Activated CD4-positive, alpha-beta T cell treated with anti-CD3 and anti-CD28 coated beads for 36 hours (primary cell): ENCODE measurements at regions of chr22 and their contacts with region 1.

Region 1: DNA sequence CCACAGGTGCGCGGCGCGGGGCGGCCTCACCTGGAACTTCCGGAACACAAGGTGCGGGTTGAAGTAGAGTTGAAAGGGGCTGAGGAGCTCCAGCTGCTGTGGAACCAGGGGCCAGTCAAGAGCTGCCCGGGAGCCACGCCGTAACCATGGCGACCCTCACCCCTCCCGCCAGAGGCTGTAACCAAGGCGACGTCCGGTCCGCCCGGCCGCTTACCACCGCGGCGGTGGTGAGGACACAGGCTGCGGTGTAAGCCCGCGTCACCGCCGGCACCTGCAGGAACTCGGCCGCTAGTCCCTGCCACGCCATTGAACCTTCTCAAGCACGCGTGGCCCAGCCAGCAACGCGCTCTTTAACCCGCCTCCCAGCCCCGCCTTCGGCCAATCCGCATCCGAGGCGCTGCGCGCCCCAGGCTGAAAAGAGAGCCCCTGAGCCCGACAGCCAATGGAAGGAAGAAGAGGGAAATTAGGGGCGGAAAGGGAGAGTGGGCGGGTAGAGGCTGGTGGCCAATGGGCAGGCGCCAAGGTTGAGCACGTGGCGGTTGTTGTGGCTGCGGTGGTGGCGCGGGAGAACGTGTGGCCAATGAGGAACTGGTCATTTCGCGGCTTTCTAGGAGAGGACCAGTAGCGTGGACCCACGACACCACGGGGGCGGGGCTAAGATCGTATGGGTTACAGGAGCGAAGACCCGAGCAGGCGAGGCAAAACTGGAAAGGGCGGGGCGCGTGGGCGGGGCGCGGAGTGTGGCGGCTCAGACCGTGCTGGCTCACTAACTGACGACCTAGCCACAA is at the start of gene DERL3:
- DNase-seq: peak; percentile 97
- ATAC-seq: peak; percentile 94
- H3K4me3 Mint-ChIP-seq: peak within 1 kb of the TSS; percentile 83
- H3K27ac Mint-ChIP-seq: peak within 1 kb of the TSS; percentile 80
- H3K4me1 Mint-ChIP-seq: peaks cover 19% of the 10 kb centered on the region
- H3K27me3 Mint-ChIP-seq: peaks cover 2% of the 10 kb centered on the region
- total RNA-seq, gene DERL3: 5.2 to 5.7 TPM

Region 2: GRCh38 chr22:23750714-23751440 is 88.0 kb before region 1 on chr22 and contains the start of gene ZNF70:
- CTCF ChIA-PET with region 1: interaction called, 3 read pairs
- POLR2A ChIA-PET with region 1: no interaction called
- intact Hi-C with region 1: loop called in 1 of 2 experiments (anchors 1 kb)
- DNase-seq: peak; percentile 91
- ATAC-seq: peak; percentile 99
- H3K4me3 Mint-ChIP-seq: peak within 1 kb of the TSS; percentile 77
- H3K27ac Mint-ChIP-seq: peak within 1 kb of the TSS; percentile 56
- H3K4me1 Mint-ChIP-seq: peaks cover 11% of the 10 kb centered on the region
- H3K27me3 Mint-ChIP-seq: peaks cover 2% of the 10 kb centered on the region
- total RNA-seq, gene ZNF70: 1.6 to 1.7 TPM

Region 3: GRCh38 chr22:23826465-23827199 is 12.2 kb before region 1 on chr22:
- CTCF ChIA-PET with region 1: no interaction called
- POLR2A ChIA-PET with region 1: no interaction called
- intact Hi-C with region 1: no loop called
- DNase-seq: no peak
- ATAC-seq: no peak
- H3K4me3 Mint-ChIP-seq: no peak overlapping the region
- H3K27ac Mint-ChIP-seq: peak overlapping the region; percentile 73
- H3K4me1 Mint-ChIP-seq: no peaks in the 10 kb centered on the region
- H3K27me3 Mint-ChIP-seq: no peaks in the 10 kb centered on the region

Region 4: GRCh38 chr22:24011735-24012068 is 172.8 kb after region 1 on chr22:
- CTCF ChIA-PET with region 1: no interaction called
- POLR2A ChIA-PET with region 1: no interaction called
- intact Hi-C with region 1: no loop called
- DNase-seq: no peak
- ATAC-seq: no peak
- H3K4me3 Mint-ChIP-seq: peak overlapping the region; percentile 92
- H3K27ac Mint-ChIP-seq: peak overlapping the region; percentile 94
- H3K4me1 Mint-ChIP-seq: peaks cover 27% of the 10 kb centered on the region
- H3K27me3 Mint-ChIP-seq: no peaks in the 10 kb centered on the region